Endothelial cell of umbilical vein (primary cell): ENCODE measurements at regions of chr1 and their contacts with region 1.

Region 1: GRCh38 chr1:52268372-52268771 is 97.6 kb downstream of the CC2D1B start:
- DNase-seq: peak; percentile 73
- H3K4me3 ChIP-seq: no peak overlapping the region
- H3K27ac ChIP-seq: no peak overlapping the region
- H3K4me1 ChIP-seq: peaks cover 11% of the 10 kb centered on the region
- H3K27me3 ChIP-seq: no peaks in the 10 kb centered on the region
- CTCF ChIP-seq: no peak
- POLR2A ChIP-seq: no peak

Region 2: DNA sequence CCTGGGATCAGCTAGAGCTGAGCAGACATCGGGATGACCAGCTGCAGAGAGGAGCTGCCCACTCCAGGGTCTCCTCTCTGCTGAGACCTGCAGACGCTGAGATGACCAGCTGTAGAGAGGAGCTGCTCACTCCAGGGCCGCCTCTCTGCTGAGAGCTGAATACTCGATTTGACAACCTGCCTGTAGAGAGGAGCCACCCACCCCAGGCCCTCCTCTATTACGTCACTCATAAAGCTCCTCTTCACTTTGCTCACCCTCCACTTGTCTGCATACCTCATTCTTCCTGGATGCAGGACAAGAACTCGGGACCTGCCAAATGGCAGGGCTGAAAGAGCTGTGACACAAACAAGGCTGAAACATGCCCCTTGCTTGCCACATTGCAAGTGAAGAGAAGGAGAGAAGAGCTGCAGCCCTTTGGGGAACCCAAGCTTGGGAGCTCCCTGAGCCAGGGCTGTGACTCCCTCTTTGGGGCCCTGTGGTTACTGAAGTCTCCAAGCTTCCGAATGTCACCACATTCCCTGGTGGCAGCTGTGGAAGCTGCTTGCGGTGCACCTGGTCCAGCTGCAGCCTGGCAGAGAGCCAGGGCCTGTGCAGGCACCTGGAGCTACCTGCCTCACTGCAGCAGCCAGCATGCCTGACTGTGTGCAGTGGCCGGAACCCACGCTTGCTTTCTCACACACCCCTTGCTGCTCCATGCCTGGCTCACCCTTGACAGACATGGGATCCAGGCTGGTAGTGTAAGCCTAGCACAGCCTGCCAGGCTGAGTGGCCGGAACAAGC is 38.0 kb after region 1 on chr1:
- CTCF ChIA-PET with region 1: no interaction called
- POLR2A ChIA-PET with region 1: no interaction called
- dilution Hi-C with region 1: no loop called
- intact Hi-C with region 1: loop called (anchors 1 kb)
- DNase-seq: no peak
- H3K4me3 ChIP-seq: no peak overlapping the region
- H3K27ac ChIP-seq: no peak overlapping the region
- H3K4me1 ChIP-seq: no peaks in the 10 kb centered on the region
- H3K27me3 ChIP-seq: no peaks in the 10 kb centered on the region
- CTCF ChIP-seq: no peak
- POLR2A ChIP-seq: no peak